ENCODE measurements at regions of chr6 and their contacts with region 1.

Region 1: DNA sequence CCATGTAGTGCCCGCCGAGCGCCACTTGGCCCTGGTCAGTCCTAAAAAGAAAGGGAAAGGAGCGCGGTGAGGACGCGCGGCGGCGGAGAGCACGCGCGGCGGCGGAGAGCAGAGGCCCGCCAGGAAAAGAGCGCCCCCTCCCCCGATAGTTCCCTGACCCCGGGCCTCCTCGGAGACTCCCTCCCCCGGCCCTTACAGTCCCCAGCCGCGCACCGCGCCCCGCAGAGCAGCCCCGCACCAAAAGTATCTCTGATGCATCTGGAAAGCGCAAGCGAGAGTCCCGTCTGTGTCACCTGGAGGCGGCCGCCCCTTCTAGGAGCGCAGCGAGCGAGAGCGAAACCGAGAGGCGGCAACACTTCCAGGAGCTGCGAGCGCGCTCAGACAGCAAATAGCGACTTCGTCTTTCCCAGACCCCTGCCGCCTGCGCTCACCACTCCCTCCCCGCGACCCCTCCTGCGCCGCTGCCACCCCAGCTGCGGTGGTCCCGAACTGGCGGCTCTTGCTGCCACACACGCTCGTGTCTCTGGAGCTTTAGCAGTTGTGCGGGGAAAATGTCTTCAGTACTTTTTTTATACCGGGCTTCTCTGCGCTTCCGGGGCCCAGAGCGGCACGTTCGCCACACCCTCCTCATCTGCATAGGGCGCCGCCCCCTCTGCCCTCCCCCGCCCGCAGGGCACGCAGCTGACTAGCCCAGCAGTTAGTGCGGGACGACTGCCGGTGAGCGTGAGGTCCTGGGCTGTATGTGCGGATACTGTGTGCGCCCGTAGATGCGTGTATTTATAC is at the start of gene TENT5A:
- DNase-seq: peak in 1 of 2 donors; percentile 97
- H3K4me3 ChIP-seq: peak within 1 kb of the TSS; percentile 85 to 87
- H3K27ac ChIP-seq: peak within 1 kb of the TSS; percentile 86
- H3K4me1 ChIP-seq: peaks cover 25% of the 10 kb centered on the region
- H3K27me3 ChIP-seq: no peaks in the 10 kb centered on the region
- CTCF ChIP-seq: peak in 1 of 3 experiments; percentile 34
- POLR2A ChIP-seq: peak; percentile 63 to 89
- total RNA-seq, gene TENT5A: 20.6 TPM

Region 2: GRCh38 chr6:82017288-82017687 is 265.0 kb after region 1 on chr6:
- intact Hi-C with region 1: loop called (anchors 10 kb)
- DNase-seq: peak in 1 of 2 donors; percentile 94
- H3K4me3 ChIP-seq: no peak overlapping the region
- H3K27ac ChIP-seq: peak overlapping the region; percentile 36
- H3K4me1 ChIP-seq: peaks cover 31% of the 10 kb centered on the region
- H3K27me3 ChIP-seq: no peaks in the 10 kb centered on the region
- CTCF ChIP-seq: no peak
- POLR2A ChIP-seq: no peak

Measured in vagina (tissue), 2 donors.